Dorsolateral prefrontal cortex (tissue), 120 donors: ENCODE measurements at regions of chr7 and their contacts with region 1.

Region 1: GRCh38 chr7:81499262-81500116 is 270.4 kb downstream of the HGF start:
- DNase-seq: no peak
- H3K4me3 ChIP-seq: peak overlapping the region in 2 of 59 donors; percentile 5 to 24
- H3K27ac ChIP-seq: peak overlapping the region in 15 of 59 donors; percentile 7 to 65 (median 28)
- H3K27me3 ChIP-seq: no peaks in the 10 kb centered on the region
- CTCF ChIP-seq: peak; percentile 56 to 88 (median 74)

Region 2: DNA sequence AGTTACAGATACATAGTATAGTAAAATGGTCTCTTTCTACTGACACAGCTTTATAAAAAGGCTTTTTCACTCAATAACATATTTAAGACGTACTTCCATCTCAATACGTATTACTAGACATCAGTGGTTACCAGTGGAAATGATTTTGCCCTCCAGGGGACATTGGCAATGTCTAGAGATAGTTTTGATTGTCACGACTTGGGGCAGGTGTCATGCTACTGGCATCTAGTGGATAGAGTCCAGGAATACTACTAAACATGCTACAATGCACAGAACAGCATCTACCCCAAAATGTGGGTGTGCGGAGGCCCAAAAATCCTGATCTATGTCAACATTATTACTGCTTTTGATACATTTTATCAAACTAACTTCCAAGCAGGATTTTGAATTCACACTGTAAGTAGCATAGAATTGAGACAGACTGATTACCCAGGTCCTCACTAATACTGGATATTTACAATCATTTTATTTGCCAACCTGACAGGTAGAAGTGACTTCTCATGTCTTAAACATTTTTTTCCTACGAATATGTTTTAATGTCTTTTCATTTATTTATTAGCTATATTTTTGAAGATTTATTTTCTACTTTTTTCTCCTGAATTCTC is 216.6 kb after region 1 on chr7:
- intact Hi-C with region 1: loop called in 1 of 2 experiments (anchors 10 kb)
- DNase-seq: no peak
- H3K4me3 ChIP-seq: no peak overlapping the region
- H3K27ac ChIP-seq: no peak overlapping the region
- H3K27me3 ChIP-seq: no peaks in the 10 kb centered on the region
- CTCF ChIP-seq: peak in 22 of 56 donors; percentile 11 to 45 (median 27)

Region 3: DNA sequence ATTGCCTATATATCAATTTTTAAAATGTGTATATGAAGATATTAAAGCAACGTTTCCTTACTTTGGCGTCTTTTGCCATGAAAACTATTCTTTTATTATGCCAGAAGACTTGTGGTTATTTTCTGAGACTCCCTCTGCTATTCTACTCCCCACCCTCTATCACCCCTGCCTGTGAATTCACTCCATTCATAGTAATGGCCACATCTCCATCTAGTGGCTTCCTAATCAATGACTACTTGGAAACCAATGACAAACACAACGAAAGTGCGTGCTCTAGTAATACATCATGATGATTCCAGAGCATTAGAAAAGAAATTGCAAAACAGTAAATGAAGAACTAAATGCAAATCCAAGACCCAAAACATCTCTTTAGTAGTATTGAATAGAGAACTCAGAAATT is 457.0 kb after region 1 on chr7:
- intact Hi-C with region 1: loop called (anchors 2 to 5 kb)
- DNase-seq: no peak
- H3K4me3 ChIP-seq: no peak overlapping the region
- H3K27ac ChIP-seq: no peak overlapping the region
- H3K27me3 ChIP-seq: no peaks in the 10 kb centered on the region
- CTCF ChIP-seq: peak in 54 of 56 donors; percentile 11 to 78 (median 54)

Region 4: DNA sequence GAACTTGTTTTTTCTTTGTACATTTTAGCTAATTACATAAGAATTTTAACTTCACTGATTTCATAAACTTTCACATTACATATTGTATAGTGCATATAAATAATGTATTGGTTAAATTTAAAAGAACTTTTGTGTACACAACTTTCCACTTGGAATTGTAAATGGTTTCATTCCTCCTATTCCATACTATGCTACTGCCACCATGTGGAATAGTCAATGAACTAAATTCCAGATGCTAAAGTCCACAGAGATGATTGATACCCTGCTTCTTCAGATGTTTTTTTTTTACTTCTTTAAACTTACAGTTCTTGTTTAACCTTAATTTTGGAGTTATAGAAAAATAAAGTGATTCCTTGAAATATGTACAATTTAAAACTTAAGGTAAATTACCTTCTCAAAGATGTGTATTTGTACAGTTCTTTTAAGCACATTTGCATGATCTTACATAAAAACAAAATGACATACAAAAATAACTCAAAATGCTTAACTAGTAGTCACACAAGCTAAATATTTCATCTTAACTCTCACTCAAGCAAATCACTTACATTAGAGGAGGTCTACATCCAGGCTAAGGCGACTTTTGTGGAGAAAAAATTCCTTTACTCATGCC is 518.0 kb after region 1 on chr7:
- intact Hi-C with region 1: loop called (anchors 2 kb)
- DNase-seq: no peak
- H3K4me3 ChIP-seq: no peak overlapping the region
- H3K27ac ChIP-seq: peak overlapping the region in 4 of 59 donors; percentile 2 to 20 (median 18)
- H3K27me3 ChIP-seq: no peaks in the 10 kb centered on the region
- CTCF ChIP-seq: peak in 55 of 56 donors; percentile 50 to 88 (median 68)

Region 5: DNA sequence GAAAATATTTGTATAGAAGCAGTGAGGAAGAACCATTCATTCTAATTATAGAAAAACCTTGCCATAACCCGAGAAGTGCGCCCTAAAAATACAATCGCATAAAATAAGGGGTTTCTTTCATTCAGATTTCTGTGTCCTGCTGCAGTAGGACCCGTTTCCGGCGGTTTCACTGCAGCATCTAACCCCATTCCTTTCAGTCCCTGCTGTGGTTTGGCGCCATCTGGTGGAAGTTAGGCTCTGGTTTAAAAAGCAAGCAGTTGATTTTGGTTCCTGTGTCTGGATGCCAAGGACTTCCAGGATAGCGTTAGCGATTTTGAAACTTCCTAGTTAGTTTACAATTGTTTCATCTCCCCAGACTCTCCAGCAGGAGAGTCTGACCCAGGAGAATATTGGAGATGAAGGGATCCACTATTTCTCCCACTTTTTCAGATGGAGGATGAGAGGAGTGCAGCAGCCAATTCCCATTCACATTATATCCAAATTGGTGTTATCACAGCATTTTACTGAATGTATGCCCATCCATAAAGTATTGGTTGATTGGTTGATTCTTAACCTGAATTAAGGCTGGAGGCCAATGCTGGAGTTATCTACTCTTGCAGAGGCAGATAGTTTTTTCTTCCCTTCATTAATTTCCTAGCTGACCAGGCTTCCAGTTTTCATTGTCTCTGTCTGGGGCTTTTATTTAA is 1072.8 kb after region 1 on chr7:
- intact Hi-C with region 1: loop called in 1 of 2 experiments (anchors 10 kb)
- DNase-seq: peak; percentile 68 to 92 (median 86)
- H3K4me3 ChIP-seq: peak overlapping the region in 43 of 59 donors; percentile 2 to 50 (median 30)
- H3K27ac ChIP-seq: peak overlapping the region in 7 of 59 donors; percentile 5 to 70 (median 32)
- H3K27me3 ChIP-seq: no peaks in the 10 kb centered on the region
- CTCF ChIP-seq: peak; percentile 85 to 100 (median 94)

Region 6: DNA sequence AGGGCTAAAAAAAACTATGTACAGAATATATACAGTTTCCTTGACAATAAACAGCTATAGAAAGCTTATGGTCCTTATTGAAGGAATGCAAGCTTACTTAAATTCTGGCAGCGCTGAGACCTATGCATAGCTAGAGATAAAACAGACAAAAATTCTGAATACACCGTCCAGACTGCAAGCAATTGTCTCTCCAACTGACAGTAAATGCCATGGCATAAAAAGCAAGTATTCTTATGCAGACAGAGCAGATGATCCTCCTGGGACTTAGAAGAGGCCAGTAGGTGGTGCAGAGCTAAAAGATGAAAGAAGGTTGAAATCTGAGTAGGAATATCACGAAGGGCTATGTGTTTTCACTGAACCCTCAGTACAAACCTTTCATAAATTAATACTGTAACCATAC is 1101.0 kb after region 1 on chr7:
- intact Hi-C with region 1: loop called in 1 of 2 experiments (anchors 10 kb)
- DNase-seq: no peak
- H3K4me3 ChIP-seq: peak overlapping the region in 17 of 59 donors; percentile 1 to 47 (median 18)
- H3K27ac ChIP-seq: peak overlapping the region in 55 of 59 donors; percentile 10 to 89 (median 75)
- H3K27me3 ChIP-seq: no peaks in the 10 kb centered on the region
- CTCF ChIP-seq: peak in 8 of 56 donors; percentile 6 to 18 (median 12)